Left colon (tissue), 2 donors: ENCODE measurements at regions of chr18 and their contacts with region 1.

Region 1: GRCh38 chr18:32552421-32553030 is 81.8 kb upstream of the GAREM1 start:
- DNase-seq: peak; percentile 56 to 60
- ATAC-seq: peak; percentile 88

Region 2: GRCh38 chr18:32158108-32158624 is 394.4 kb before region 1 on chr18:
- intact Hi-C with region 1: loop called (anchors 2 to 10 kb)
- DNase-seq: peak; percentile 83 to 87
- ATAC-seq: peak; percentile 79

Region 3: GRCh38 chr18:32271672-32272208 is 280.8 kb before region 1 on chr18:
- intact Hi-C with region 1: loop called in 1 of 2 experiments (anchors 5 kb)
- DNase-seq: no peak
- ATAC-seq: peak; percentile 65

Region 4: GRCh38 chr18:32301976-32302743 is 250.4 kb before region 1 on chr18:
- intact Hi-C with region 1: no loop called
- DNase-seq: no peak
- ATAC-seq: peak; percentile 68